ENCODE measurements at regions of chrX and their contacts with region 1.

Region 1: DNA sequence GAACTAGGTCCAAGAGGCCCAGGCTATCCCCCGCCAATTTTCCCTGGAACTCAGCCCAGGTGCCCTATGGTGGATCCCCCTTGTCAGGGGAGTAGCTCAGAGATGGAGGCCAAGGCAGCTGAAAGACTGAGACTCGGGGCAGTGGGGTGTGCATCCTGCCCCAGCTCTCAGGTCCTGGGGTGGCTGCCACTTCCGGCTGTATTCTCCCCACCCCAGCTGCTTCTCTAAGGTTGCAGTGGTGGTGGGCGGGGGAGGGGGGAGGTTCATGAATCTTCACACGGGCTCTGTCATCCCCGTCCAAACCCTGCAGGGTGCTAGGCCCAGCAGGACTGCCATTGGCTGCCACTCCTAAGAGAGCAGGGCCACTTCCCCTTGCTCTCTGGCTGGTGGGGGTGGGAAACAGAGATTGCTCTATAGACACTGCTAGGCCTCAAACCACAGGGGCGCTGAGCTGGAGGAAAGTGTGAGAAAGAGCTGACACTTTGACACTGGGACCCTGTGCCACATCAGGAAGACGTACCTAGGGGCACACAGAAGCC is 1.5 kb downstream of the SASH3 start:
- DNase-seq: peak; percentile 94
- ATAC-seq: peak; percentile 78
- H3K4me3 Mint-ChIP-seq: peak overlapping the region; percentile 78
- H3K27ac Mint-ChIP-seq: peak overlapping the region; percentile 93
- H3K4me1 Mint-ChIP-seq: peaks cover 60% of the 10 kb centered on the region
- H3K27me3 Mint-ChIP-seq: no peaks in the 10 kb centered on the region

Region 2: GRCh38 chrX:129678614-129679195 is 102.5 kb before region 1 on chrX:
- CTCF ChIA-PET with region 1: no interaction called
- DNase-seq: peak; percentile 45
- ATAC-seq: peak; percentile 69
- H3K4me3 Mint-ChIP-seq: peak overlapping the region; percentile 48
- H3K27ac Mint-ChIP-seq: no peak overlapping the region
- H3K4me1 Mint-ChIP-seq: peaks cover 8% of the 10 kb centered on the region
- H3K27me3 Mint-ChIP-seq: peaks cover 6% of the 10 kb centered on the region

Region 3: GRCh38 chrX:129754056-129755024 is 26.9 kb before region 1 on chrX:
- CTCF ChIA-PET with region 1: interaction called, 66 read pairs
- DNase-seq: no peak
- ATAC-seq: no peak
- H3K4me3 Mint-ChIP-seq: no peak overlapping the region
- H3K27ac Mint-ChIP-seq: no peak overlapping the region
- H3K4me1 Mint-ChIP-seq: peaks cover 45% of the 10 kb centered on the region
- H3K27me3 Mint-ChIP-seq: no peaks in the 10 kb centered on the region

Region 4: DNA sequence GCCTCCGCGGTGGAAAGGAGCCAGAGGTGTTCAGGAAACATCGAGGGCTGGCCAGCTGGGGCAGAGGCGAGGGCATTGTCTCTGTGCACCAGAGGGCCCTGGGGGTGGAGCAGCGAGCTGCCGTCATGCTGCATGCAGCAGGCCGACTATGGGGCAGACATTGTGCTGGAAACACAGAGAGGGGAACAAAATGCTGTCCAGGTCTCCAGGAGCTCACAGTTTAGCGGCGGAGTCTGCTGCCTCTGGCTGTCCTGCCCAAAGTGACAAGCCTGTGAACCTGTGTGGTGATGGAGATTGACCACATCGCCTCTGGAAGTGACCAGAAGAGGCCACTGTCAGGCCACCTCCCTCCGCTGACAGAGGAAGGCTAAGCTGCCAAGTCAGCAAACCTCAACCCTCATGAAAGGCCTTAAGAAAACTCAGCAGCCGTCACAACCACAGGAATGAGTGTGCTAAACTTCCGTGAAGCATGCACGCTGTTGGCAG is 21.6 kb before region 1 on chrX:
- CTCF ChIA-PET with region 1: interaction called, 66 read pairs
- DNase-seq: peak; percentile 84
- ATAC-seq: peak; percentile 77
- H3K4me3 Mint-ChIP-seq: peak overlapping the region; percentile 39
- H3K27ac Mint-ChIP-seq: peak overlapping the region; percentile 87
- H3K4me1 Mint-ChIP-seq: peaks cover 66% of the 10 kb centered on the region
- H3K27me3 Mint-ChIP-seq: no peaks in the 10 kb centered on the region

Region 5: DNA sequence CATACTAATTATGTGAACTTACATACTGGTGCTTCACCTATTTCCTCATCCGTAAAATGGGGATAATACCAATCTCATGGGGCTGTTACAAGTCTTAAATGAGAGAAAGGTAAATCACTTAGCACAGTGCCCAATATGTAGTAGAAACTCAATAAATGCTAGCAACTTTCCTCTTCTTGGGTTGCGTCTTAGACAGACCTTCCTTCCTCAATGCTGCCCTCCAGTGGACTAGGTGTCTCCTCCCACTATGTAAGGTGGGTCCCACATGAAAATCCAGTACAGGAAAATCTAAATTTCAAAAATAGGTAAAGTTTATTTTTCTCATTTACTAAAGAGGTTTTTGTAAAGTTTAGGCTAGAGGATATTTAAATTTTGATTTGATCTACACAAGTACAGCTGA is 41.9 kb after region 1 on chrX:
- CTCF ChIA-PET with region 1: interaction called, 15 read pairs
- DNase-seq: peak; percentile 67
- ATAC-seq: peak; percentile 97
- H3K4me3 Mint-ChIP-seq: peak overlapping the region; percentile 53
- H3K27ac Mint-ChIP-seq: peak overlapping the region; percentile 91
- H3K4me1 Mint-ChIP-seq: peaks cover 17% of the 10 kb centered on the region
- H3K27me3 Mint-ChIP-seq: no peaks in the 10 kb centered on the region